ENCODE measurements at regions of chr22 and their contacts with region 1.

Region 1: GRCh38 chr22:30423982-30424963 is 1.3 kb upstream of the MTFP1 start:
- DNase-seq: peak; percentile 100
- ATAC-seq: peak; percentile 91
- H3K4me3 Mint-ChIP-seq: peak overlapping the region; percentile 97
- H3K27ac Mint-ChIP-seq: peak overlapping the region; percentile 97
- H3K4me1 Mint-ChIP-seq: peaks cover 53% of the 10 kb centered on the region
- H3K27me3 Mint-ChIP-seq: no peaks in the 10 kb centered on the region

Region 2: DNA sequence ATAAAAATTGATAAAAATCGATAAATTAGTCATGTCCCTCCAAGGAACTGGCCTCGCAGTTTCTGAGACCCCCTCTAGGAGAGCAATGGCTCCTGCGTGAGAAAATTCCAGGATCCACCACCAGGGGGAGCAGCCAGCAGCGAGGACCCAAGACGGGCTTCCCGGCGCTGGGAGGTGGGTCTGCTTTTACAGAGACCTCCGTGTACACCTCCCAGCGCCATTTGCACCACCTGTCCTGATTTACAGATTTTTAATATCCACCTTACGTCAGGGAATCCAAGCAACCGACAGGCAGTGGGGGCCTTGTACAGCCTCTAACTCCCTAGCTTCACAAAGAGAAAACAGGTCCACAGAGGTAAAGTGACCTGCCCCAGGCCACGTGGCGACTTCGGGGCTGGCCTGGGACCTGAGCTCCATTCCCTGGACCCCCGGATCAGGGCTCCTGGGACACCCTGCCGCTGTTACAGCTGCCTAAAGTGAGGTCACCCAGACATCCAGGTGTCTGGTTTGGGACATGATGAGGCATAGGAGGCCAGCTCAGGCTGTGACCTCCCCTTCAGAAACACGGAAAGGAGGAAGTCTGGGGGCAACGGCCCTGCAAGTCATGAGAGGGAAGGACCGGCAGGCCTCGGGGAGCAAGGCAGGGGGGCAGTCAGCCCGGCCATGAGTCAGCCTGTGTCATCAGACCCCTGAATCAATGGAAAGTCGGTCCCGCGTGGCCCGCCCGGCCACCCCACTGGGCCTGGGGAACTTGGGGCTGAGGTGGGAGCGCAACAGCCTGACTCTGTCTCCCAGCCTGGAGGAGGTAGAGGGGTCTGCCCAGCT is 161.1 kb before region 1 on chr22:
- CTCF ChIA-PET with region 1: interaction called, 11 read pairs
- POLR2A ChIA-PET with region 1: no interaction called
- DNase-seq: peak; percentile 87
- ATAC-seq: no peak
- H3K4me3 Mint-ChIP-seq: peak overlapping the region; percentile 96
- H3K27ac Mint-ChIP-seq: peak overlapping the region; percentile 97
- H3K4me1 Mint-ChIP-seq: peaks cover 61% of the 10 kb centered on the region
- H3K27me3 Mint-ChIP-seq: no peaks in the 10 kb centered on the region

Region 3: DNA sequence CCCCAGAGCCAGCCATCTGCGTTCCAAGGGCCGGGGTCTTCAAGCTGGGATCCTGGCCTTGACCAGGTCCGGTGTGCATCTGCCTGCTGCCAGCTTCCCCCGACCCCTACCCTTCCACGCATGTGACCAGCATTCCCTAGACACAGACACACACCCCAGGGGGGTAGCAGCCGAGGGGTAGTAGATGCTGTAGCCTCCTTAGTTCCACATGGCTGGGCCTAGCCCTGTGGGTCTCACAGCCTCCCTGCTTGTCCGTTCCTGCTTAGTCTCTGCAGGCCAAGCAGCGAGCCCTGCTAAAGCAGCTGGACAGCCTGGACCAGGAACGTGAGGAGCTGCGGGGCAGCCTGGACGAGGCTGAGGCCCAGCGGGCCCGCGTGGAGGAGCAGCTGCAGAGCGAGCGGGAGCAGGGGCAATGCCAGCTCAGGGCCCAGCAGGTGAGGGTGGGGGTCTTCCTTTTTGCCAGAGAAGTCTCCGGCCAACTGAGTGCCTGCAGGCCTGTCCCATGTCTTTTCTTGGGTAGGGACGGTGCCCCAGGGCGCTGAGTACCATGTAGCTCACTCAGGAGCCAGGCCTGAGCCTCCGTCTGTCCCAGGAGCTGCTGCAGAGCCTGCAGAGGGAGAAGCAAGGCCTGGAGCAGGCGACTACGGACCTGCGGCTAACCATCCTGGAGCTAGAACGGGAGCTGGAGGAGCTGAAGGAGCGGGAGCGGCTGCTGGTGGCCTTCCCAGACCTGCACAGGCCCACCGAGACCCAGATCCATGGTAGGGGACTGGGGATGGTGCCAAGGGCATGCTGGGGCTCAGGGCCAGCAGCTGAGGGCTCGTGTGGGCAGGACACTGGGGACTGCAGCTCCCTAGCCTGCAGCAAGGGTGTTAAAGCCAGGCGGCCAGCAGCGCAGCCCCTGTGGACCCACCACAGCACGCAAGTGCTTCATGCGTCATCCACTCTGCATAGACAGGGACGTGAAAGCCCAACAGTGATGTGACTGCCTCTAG is 50.6 kb before region 1 on chr22:
- CTCF ChIA-PET with region 1: no interaction called
- POLR2A ChIA-PET with region 1: no interaction called
- DNase-seq: no peak
- ATAC-seq: no peak
- H3K4me3 Mint-ChIP-seq: no peak overlapping the region
- H3K27ac Mint-ChIP-seq: no peak overlapping the region
- H3K4me1 Mint-ChIP-seq: no peaks in the 10 kb centered on the region
- H3K27me3 Mint-ChIP-seq: no peaks in the 10 kb centered on the region

Region 4: GRCh38 chr22:30402028-30402765 is 22.1 kb before region 1 on chr22:
- CTCF ChIA-PET with region 1: interaction called, 166 read pairs
- POLR2A ChIA-PET with region 1: interaction called, 11 read pairs
- DNase-seq: no peak
- ATAC-seq: no peak
- H3K4me3 Mint-ChIP-seq: no peak overlapping the region
- H3K27ac Mint-ChIP-seq: no peak overlapping the region
- H3K4me1 Mint-ChIP-seq: peaks cover 21% of the 10 kb centered on the region
- H3K27me3 Mint-ChIP-seq: no peaks in the 10 kb centered on the region

Region 5: GRCh38 chr22:30413745-30414524 is 10.3 kb before region 1 on chr22:
- CTCF ChIA-PET with region 1: interaction called, 15 read pairs
- POLR2A ChIA-PET with region 1: interaction called, 17 read pairs
- DNase-seq: no peak
- ATAC-seq: no peak
- H3K4me3 Mint-ChIP-seq: no peak overlapping the region
- H3K27ac Mint-ChIP-seq: peak overlapping the region; percentile 49
- H3K4me1 Mint-ChIP-seq: peaks cover 11% of the 10 kb centered on the region
- H3K27me3 Mint-ChIP-seq: no peaks in the 10 kb centered on the region

Region 6: DNA sequence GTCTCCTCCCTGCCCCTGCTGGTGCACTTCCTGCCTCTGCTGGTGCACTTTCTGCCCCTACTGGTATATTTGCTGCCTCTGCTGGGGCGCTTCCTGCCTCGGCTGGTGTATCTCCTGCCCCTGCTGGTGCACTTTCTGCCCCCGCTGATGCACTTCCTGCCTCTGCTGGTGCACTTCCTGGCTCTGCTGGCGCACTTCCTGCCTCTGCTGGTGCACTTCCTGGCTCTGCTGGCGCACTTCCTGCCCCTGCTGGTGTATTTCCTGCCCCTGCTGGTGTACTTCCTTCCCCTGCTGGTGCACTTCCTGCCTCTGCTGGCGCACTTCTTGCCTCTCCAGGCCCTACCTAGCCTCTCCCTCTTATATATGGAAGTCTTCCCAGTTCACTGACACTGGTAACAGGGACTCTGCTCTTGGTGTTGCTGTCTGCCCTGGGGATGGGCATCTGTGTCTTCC is 11.4 kb after region 1 on chr22:
- CTCF ChIA-PET with region 1: interaction called, 61 read pairs
- POLR2A ChIA-PET with region 1: interaction called, 39 read pairs
- DNase-seq: peak; percentile 91
- ATAC-seq: peak; percentile 88
- H3K4me3 Mint-ChIP-seq: peak overlapping the region; percentile 83
- H3K27ac Mint-ChIP-seq: peak overlapping the region; percentile 99
- H3K4me1 Mint-ChIP-seq: peaks cover 22% of the 10 kb centered on the region
- H3K27me3 Mint-ChIP-seq: peaks cover 14% of the 10 kb centered on the region

Region 7: DNA sequence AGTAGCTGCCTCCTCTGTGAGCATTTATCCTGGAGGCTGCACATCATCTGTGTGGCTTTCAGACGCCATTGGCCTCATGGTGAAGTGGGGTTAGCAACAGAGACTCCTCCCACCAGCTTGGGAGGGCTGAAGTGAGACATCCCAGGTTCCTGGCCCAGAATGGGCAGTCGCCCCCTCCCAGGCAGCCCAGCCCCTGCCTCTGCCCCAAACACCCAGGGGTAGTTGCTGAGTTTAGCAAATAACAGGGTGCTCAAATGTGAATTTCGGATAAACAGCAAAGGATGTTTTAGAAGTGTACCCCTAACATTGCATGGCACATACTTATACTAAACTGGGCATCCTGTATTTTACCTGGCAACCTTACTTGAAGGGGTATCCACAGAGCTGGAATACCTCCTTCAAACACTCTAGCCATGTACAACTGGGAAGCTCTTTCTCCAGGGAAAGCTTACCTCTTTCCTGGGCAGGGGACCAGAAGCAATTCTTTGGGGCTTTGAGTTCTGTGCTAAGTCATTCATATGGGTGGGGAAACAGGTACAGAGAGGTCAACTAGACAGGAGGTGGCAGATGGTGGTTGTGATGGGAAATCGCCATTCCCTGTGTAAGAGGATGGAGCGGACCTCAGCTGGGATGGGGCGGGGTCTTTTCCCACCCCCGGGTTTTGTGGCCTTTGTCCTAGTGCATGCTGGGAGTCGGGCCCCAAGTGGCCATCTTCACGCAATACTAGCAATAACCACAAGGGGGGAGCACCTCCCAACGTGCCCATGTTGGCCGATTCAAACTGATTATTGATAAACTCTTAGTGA is 20.6 kb after region 1 on chr22:
- CTCF ChIA-PET with region 1: interaction called, 19 read pairs
- POLR2A ChIA-PET with region 1: interaction called, 4 read pairs
- DNase-seq: peak; percentile 70
- ATAC-seq: peak; percentile 43
- H3K4me3 Mint-ChIP-seq: no peak overlapping the region
- H3K27ac Mint-ChIP-seq: no peak overlapping the region
- H3K4me1 Mint-ChIP-seq: peaks cover 32% of the 10 kb centered on the region
- H3K27me3 Mint-ChIP-seq: peaks cover 18% of the 10 kb centered on the region

Region 8: DNA sequence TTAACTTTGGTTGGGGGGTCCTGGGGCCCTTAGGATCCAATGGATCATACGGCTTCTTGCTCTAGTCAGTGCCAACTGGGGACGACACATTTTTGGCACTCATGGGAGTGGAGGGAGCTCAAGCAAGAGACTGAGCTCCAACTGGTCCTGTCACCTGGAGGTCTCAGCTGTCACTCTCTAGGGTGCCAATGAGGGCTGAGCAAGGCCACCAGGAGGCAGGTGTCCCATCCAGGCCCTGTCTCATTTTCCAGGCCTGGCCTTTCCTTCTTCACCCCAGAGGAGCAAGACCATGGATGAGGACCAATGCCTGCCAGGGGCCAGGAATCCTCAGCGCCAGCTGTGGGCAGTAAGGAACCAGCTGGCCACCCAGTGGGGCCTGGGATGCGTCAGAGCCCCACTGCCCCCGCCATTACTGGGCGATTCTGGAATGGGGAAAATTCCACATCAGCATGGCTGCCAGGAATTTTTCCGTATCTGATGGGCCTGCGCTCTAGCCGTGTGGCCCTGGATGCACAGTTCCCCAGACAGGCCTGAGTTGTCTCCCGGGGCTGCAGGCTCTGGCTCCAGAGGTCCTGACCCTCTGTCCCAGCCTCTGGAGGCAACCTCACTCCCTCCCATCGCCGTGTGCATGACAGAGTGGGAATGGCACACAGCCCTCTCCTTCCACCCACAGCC is 150.9 kb after region 1 on chr22:
- CTCF ChIA-PET with region 1: no interaction called
- POLR2A ChIA-PET with region 1: no interaction called
- DNase-seq: no peak
- ATAC-seq: no peak
- H3K4me3 Mint-ChIP-seq: no peak overlapping the region
- H3K27ac Mint-ChIP-seq: no peak overlapping the region
- H3K4me1 Mint-ChIP-seq: peaks cover 3% of the 10 kb centered on the region
- H3K27me3 Mint-ChIP-seq: peaks cover 6% of the 10 kb centered on the region

Measured in activated CD8-positive, alpha-beta T cell treated with anti-CD3 and anti-CD28 coated beads, Interleukin-2, amount 10 ng/mL, durations not matched to agents 7 days and 5 days (primary cell).